K562 (cell line): ENCODE measurements at regions of chr5 and their contacts with region 1.

Region 1: DNA sequence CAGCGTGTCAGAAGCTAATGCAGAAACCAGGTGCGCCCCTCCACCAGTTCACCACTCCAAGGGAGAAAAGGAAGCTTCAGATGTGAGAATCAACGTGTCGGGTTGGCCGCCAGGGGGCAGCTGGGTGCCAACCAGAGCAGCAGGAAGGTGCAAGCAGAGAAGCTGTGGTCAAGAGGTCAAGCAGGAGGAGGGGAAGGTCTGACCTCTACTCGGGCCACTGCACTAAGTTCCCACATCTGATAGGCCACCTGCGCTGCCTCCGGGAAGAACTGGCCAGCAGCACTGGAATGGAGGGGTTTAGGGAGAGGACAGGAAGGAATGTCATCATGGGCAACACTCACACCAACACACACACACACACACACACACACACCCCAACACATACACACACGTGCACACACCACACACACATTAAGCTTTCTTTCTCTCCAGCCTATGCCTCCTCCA is 31.4 kb downstream of the ANXA6 start:
- DNase-seq: peak; percentile 84 to 91 (median 90)
- ATAC-seq: peak; percentile 96
- H3K4me3 ChIP-seq: no peak overlapping the region
- H3K27ac ChIP-seq: no peak overlapping the region
- H3K4me1 ChIP-seq: peaks cover 7 to 8% of the 10 kb centered on the region in 2 experiments; a peak in 4 of 5 replicates
- H3K27me3 ChIP-seq: peaks cover 0 to 11% of the 10 kb centered on the region in 2 experiments; a peak in 1 of 5 replicates
- CTCF ChIP-seq: peak; percentile 91 to 93 (median 91)
- EP300 ChIP-seq: no peak
- POLR2A ChIP-seq: no peak
- RAD21 ChIP-seq: peak; percentile 94 to 98

Region 2: DNA sequence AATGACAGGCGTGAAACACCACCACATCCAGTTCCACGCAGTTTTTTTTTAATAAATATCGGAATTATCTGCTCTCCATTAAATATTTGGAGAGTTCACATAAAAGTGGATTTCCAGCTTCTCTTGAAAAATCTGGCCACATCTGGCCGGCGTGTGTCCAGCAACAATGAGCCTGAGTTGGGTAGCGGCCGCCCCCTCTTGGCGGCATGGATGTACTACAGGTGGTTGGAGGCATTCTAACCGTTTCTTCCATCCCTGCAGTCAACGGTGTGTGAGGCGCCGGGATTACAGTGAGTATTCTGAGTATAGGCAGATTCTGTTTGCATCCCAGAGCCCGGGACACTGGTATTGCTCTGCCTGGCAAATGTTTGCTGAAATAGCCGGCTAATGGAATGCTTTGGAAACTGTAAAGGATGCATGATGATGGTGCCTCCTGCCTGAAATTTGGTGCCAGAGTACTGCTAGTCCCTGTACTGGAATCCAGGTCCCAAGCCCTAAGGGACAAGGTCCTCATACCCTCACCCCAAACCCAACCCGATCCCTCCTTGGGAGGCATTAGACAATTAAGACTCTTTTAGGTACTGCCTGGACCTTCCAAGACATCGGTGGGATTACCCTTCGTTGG is 113.1 kb after region 1 on chr5:
- CTCF ChIA-PET with region 1: interaction called, 17 read pairs
- POLR2A ChIA-PET with region 1: interaction called, 3 read pairs
- in situ Hi-C with region 1: loop called (anchors 5 kb)
- intact Hi-C with region 1: loop called (anchors 1 kb)
- DNase-seq: peak; percentile 75 to 83 (median 78)
- ATAC-seq: peak; percentile 95
- H3K4me3 ChIP-seq: no peak overlapping the region
- H3K27ac ChIP-seq: no peak overlapping the region
- H3K4me1 ChIP-seq: peaks cover 0 to 6% of the 10 kb centered on the region in 2 experiments; a peak in 3 of 5 replicates
- H3K27me3 ChIP-seq: peaks cover 0 to 22% of the 10 kb centered on the region in 2 experiments; a peak in 3 of 5 replicates
- CTCF ChIP-seq: peak; percentile 91 to 94 (median 92)
- EP300 ChIP-seq: no peak
- POLR2A ChIP-seq: no peak
- RAD21 ChIP-seq: peak; percentile 85 to 90

Region 3: DNA sequence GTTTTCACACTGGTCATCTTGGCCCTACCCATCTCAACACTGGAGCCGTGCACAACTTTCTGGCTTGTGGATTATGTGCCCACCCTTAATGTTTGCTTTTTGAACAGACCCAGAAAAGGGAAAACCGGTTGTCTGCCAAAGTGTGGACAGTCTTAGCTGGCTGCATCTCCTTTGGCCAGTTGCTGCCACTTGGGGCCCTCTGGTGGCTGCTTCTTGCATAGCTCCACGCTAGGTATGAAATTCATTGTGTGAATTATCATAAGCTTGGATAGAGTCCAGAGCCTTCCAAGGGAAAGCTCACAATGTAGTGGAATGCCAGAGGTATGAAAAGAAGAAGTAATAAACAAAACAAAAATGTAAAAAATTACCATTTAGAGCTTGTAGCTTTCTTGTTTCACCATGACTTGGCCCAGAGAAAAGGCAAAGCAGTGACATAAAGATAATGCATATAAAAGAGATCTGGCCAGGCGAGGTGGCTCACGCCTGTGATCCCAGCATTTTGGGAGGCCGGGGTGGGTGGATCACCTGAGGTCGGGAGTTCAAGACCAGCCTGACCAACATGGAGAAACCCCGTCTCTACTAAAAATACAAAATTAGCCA is 189.9 kb after region 1 on chr5:
- CTCF ChIA-PET with region 1: interaction called, 4 read pairs
- POLR2A ChIA-PET with region 1: no interaction called
- in situ Hi-C with region 1: no loop called
- intact Hi-C with region 1: loop called (anchors 1 kb)
- DNase-seq: peak; percentile 67 to 71 (median 68)
- ATAC-seq: peak; percentile 98
- H3K4me3 ChIP-seq: no peak overlapping the region
- H3K27ac ChIP-seq: no peak overlapping the region
- H3K4me1 ChIP-seq: no peaks in the 10 kb centered on the region
- H3K27me3 ChIP-seq: peaks cover 0 to 9% of the 10 kb centered on the region in 2 experiments; a peak in 1 of 5 replicates
- CTCF ChIP-seq: peak; percentile 82 to 90 (median 89)
- EP300 ChIP-seq: no peak
- POLR2A ChIP-seq: no peak
- RAD21 ChIP-seq: peak; percentile 70 to 85

Region 4: DNA sequence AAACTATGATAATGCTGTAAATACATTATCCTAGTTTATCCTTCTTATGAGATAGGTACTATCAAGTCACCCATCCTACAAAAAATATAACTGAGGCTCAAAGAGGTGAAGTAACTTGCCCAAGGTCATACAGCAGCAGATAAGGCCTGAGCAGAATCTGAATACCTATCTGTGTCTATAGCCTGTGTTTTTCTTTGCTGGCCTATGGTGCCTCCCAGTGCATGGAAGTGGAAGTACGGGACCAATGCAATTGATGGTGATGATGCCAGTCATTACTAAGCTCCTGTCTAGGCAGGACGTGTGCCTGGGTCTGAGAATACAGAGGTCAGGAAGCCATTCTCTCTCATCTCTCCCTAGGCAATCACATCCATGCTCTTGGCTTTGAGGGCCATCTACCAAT is 397.1 kb after region 1 on chr5:
- CTCF ChIA-PET with region 1: no interaction called
- POLR2A ChIA-PET with region 1: interaction called, 5 read pairs
- in situ Hi-C with region 1: loop called (anchors 10 kb)
- intact Hi-C with region 1: loop called (anchors 5 kb)
- DNase-seq: peak; percentile 55 to 66 (median 58)
- ATAC-seq: peak; percentile 91
- H3K4me3 ChIP-seq: no peak overlapping the region
- H3K27ac ChIP-seq: no peak overlapping the region
- H3K4me1 ChIP-seq: no peaks in the 10 kb centered on the region
- H3K27me3 ChIP-seq: peaks cover 17 to 27% of the 10 kb centered on the region in 2 experiments
- CTCF ChIP-seq: peak; percentile 71 to 83 (median 79)
- EP300 ChIP-seq: no peak
- POLR2A ChIP-seq: no peak
- RAD21 ChIP-seq: peak; percentile 66 to 85

Region 5: GRCh38 chr5:151651997-151652645 is 525.9 kb after region 1 on chr5:
- CTCF ChIA-PET with region 1: no interaction called
- POLR2A ChIA-PET with region 1: no interaction called
- in situ Hi-C with region 1: no loop called
- intact Hi-C with region 1: loop called (anchors 5 kb)
- DNase-seq: peak; percentile 61 to 82 (median 75)
- ATAC-seq: peak; percentile 100
- H3K4me3 ChIP-seq: no peak overlapping the region
- H3K27ac ChIP-seq: no peak overlapping the region
- H3K4me1 ChIP-seq: no peaks in the 10 kb centered on the region
- H3K27me3 ChIP-seq: peaks cover 3 to 15% of the 10 kb centered on the region in 2 experiments; a peak in 4 of 5 replicates
- CTCF ChIP-seq: peak; percentile 83 to 93 (median 93)
- EP300 ChIP-seq: no peak
- POLR2A ChIP-seq: no peak
- RAD21 ChIP-seq: peak; percentile 80 to 90